Activated T-helper 1 cell treated with anti-CD3 and anti-CD28 coated beads, Interleukin-12 subunit alpha, Interleukin-12 subunit beta, Interleukin-2, Interleukin-4 antibody, amounts not matched to agents 30 ng/mL and 10 ng/mL and 1 ng/mL, durations not matched to agents 14 hours and 24 hours and 36 hours (primary cell): ENCODE measurements at regions of chr17 and their contacts with region 1.

Region 1: GRCh38 chr17:31094600-31095238 is at the start of gene NF1:
- DNase-seq: peak; percentile 78
- H3K4me3 Mint-ChIP-seq: peak within 1 kb of the TSS; percentile 97
- H3K27ac Mint-ChIP-seq: peak within 1 kb of the TSS; percentile 72
- H3K4me1 Mint-ChIP-seq: peaks cover 14% of the 10 kb centered on the region
- H3K27me3 Mint-ChIP-seq: peaks cover under 1% of the 10 kb centered on the region
- total RNA-seq, gene NF1: 30.0 and 31.5 TPM in 2 replicates

Region 2: GRCh38 chr17:30906101-30906911 is 188.4 kb before region 1 on chr17 and contains the start of gene TEFM:
- intact Hi-C with region 1: loop called (anchors 2 kb)
- DNase-seq: peak; percentile 86
- H3K4me3 Mint-ChIP-seq: peak within 1 kb of the TSS; percentile 98
- H3K27ac Mint-ChIP-seq: peak within 1 kb of the TSS; percentile 87
- H3K4me1 Mint-ChIP-seq: peaks cover 35% of the 10 kb centered on the region
- H3K27me3 Mint-ChIP-seq: no peaks in the 10 kb centered on the region
- total RNA-seq, gene TEFM: 16.9 and 19.5 TPM in 2 replicates

Region 3: GRCh38 chr17:31008374-31009041 is 86.2 kb before region 1 on chr17:
- intact Hi-C with region 1: loop called (anchors 2 kb)
- DNase-seq: peak; percentile 43
- H3K4me3 Mint-ChIP-seq: peak overlapping the region; percentile 85
- H3K27ac Mint-ChIP-seq: peak overlapping the region; percentile 70
- H3K4me1 Mint-ChIP-seq: peaks cover 30% of the 10 kb centered on the region
- H3K27me3 Mint-ChIP-seq: peaks cover 16% of the 10 kb centered on the region

Region 4: GRCh38 chr17:31202968-31203367 is 108.2 kb after region 1 on chr17:
- intact Hi-C with region 1: loop called (anchors 5 kb)
- DNase-seq: no peak
- H3K4me3 Mint-ChIP-seq: no peak overlapping the region
- H3K27ac Mint-ChIP-seq: no peak overlapping the region
- H3K4me1 Mint-ChIP-seq: no peaks in the 10 kb centered on the region
- H3K27me3 Mint-ChIP-seq: no peaks in the 10 kb centered on the region

Region 5: GRCh38 chr17:31321481-31321880 is 226.8 kb after region 1 on chr17 and contains the start of gene EVI2A:
- intact Hi-C with region 1: loop called (anchors 10 kb)
- DNase-seq: peak; percentile 80
- H3K4me3 Mint-ChIP-seq: peak within 1 kb of the TSS; percentile 88
- H3K27ac Mint-ChIP-seq: peak within 1 kb of the TSS; percentile 92
- H3K4me1 Mint-ChIP-seq: peaks cover 46% of the 10 kb centered on the region
- H3K27me3 Mint-ChIP-seq: no peaks in the 10 kb centered on the region
- total RNA-seq, gene EVI2A: 46.3 and 47.9 TPM in 2 replicates

Region 6: GRCh38 chr17:31680126-31680525 is 585.4 kb after region 1 on chr17:
- intact Hi-C with region 1: no loop called
- DNase-seq: peak; percentile 52
- H3K4me3 Mint-ChIP-seq: peak overlapping the region; percentile 23
- H3K27ac Mint-ChIP-seq: peak overlapping the region; percentile 87
- H3K4me1 Mint-ChIP-seq: peaks cover 11% of the 10 kb centered on the region
- H3K27me3 Mint-ChIP-seq: peaks cover 30% of the 10 kb centered on the region